ENCODE measurements at regions of chr7 and their contacts with region 1.

Region 1: GRCh38 chr7:143735962-143736361 is 21.5 kb downstream of the CTAGE6 start:
- DNase-seq: no peak
- H3K4me3 ChIP-seq: no peak overlapping the region
- H3K27ac ChIP-seq: no peak overlapping the region
- H3K27me3 ChIP-seq: peaks cover 3% of the 10 kb centered on the region
- CTCF ChIP-seq: no peak

Region 2: GRCh38 chr7:143380255-143380645 is 355.7 kb before region 1 on chr7:
- CTCF ChIA-PET with region 1: no interaction called
- POLR2A ChIA-PET with region 1: no interaction called
- DNase-seq: peak; percentile 68
- H3K4me3 ChIP-seq: peak overlapping the region; percentile 93
- H3K27ac ChIP-seq: peak overlapping the region; percentile 100
- H3K27me3 ChIP-seq: no peaks in the 10 kb centered on the region
- CTCF ChIP-seq: peak; percentile 89

Region 3: DNA sequence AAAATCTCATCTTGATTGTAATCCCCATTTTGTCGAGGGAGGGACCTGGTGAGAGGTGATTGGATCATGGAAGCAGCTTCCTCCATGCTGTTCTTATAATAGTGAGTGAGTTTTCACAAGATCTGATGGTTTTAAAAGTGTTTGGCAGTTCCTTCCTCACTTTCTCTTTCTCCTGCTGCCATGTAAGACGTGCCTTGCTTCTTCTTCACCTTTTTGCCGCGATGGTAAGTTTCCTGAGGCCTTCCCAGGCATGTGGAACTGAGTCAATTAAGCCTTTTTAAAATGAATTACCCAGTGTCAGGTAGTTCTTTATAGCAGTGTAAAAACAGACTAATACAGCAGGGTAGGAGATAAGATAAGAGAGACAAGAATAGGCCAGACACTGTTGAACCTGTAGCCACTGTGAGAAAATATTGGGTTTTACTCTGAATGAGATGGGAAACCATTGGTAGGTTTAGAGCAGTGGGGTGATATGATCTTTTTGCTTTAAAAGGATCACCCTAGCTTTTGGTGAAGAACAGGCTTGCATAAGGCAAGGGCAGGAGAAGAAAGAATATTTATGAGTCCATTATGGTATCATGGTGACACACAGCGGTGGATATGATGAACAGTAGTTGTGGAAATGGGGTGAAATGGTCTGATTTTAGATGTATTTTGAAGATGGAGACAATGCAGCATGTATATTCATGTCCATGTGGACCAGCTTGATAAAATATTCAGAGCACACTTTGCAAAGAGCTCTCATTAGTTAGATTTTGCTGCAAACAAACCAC is 275.7 kb after region 1 on chr7:
- CTCF ChIA-PET with region 1: interaction called, 17 read pairs
- POLR2A ChIA-PET with region 1: no interaction called
- DNase-seq: no peak
- H3K4me3 ChIP-seq: no peak overlapping the region
- H3K27ac ChIP-seq: no peak overlapping the region
- H3K27me3 ChIP-seq: peaks cover 2% of the 10 kb centered on the region
- CTCF ChIP-seq: peak; percentile 51

Region 4: DNA sequence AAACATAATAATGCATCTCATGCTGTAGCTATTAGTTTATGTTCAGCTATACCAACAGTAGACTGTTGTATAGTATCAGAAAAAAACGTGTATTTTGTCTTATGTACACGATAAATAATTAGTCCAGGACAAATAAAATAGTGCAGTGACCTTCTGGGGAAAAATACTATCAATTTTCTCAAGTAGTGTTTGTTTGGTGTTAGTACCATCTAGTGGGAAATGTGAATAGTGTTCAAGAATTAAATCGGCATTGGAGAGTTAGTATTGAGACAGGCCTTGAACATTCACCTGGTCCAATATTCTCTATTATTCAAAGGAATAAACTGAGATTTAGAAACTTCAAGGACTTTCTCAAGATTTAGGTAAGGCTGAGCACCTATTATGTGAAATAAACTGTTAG is 291.1 kb after region 1 on chr7:
- CTCF ChIA-PET with region 1: interaction called, 20 read pairs
- POLR2A ChIA-PET with region 1: no interaction called
- DNase-seq: no peak
- H3K4me3 ChIP-seq: no peak overlapping the region
- H3K27ac ChIP-seq: no peak overlapping the region
- H3K27me3 ChIP-seq: no peaks in the 10 kb centered on the region
- CTCF ChIP-seq: peak; percentile 57

Region 5: DNA sequence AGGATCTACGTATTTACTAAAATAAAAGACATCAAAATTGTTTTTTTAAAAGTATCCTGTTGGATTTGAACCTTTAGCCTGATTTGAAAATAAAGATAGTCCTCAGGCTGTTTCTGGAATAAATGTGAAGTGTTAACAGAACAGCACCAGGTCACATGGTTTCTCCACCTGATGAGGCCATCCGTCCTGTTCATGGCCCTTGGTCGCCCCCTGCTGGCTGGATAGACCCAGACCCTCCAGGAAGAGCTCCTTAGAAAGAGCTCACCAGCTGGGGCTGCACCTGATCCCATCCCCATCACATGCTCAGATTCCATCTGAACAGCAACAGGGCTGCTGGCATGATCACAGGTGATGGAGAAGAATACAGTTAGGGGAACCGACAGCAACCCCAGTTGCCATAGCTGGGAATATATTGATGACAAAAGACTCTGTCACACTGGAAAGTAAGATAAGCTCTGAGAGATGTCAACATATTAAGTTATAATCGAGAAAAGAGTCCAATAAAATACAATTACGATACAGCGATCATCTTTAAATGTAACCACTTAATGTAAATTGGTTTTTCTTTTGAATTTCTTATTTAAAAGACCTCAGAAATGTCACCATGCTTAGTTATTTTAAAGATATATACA is 391.9 kb after region 1 on chr7:
- CTCF ChIA-PET with region 1: interaction called, 23 read pairs
- POLR2A ChIA-PET with region 1: no interaction called
- DNase-seq: peak; percentile 24
- H3K4me3 ChIP-seq: no peak overlapping the region
- H3K27ac ChIP-seq: no peak overlapping the region
- H3K27me3 ChIP-seq: no peaks in the 10 kb centered on the region
- CTCF ChIP-seq: peak; percentile 85

Measured in AG04450 (cell line).